Caki2 (cell line): ENCODE measurements at regions of chr1 and their contacts with region 1.

Region 1: GRCh38 chr1:14460173-14460572 is 138.3 kb upstream of the KAZN start:
- DNase-seq: no peak

Region 2: DNA sequence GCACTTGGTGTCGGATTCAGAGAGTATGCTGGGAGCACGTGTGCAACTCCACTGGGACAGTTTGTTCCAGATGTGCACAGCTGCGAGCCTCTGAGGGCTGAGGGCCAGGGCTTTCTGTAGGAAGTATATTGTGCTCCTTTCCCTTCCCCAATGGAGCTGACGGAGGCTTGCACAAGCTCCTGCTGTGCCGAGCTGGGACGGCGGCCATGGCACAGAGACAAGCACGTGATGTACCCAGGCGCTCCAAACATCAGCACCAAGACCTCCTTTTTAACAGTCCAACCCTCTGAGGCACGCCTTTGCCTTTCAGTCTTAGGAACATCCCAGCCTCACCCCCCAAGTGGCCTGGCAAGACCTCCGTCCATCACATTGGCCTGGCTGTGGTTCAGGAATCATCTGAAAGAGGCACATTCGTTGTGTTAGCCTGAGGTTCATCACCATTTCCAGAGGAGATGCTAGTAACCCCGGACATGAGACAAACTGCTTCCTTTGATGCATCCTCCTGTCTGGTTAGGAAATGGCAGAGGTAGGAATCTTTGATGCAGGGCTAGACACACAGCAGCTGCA is 200.9 kb before region 1 on chr1:
- in situ Hi-C with region 1: no loop called
- DNase-seq: no peak

Region 3: DNA sequence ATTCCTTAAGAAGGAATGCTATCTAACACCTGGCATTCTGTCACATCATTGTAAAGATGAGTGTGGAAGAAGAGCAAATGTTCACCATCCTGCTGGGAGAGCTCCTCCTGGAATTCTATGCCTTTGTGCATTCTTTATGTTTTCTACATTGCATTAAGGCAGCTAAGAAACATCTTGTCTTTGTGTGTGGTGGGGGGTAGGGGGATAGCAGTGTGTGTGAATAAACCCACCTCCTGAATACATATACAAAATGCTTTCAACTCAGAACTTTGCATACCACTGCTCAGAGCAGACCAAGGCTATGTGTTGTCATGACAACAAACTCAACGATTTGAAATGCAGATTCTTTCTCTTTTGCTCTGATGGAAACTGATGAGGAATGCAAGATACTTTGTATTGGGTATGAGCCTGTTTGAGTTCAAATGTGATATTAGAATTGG is 55.3 kb before region 1 on chr1:
- in situ Hi-C with region 1: loop called (anchors 5 kb)
- DNase-seq: no peak

Region 4: GRCh38 chr1:14516974-14517840 is 57.0 kb after region 1 on chr1:
- in situ Hi-C with region 1: no loop called
- DNase-seq: no peak